ENCODE measurements at regions of chr13 and their contacts with region 1.

Region 1: GRCh38 chr13:32310134-32310706 is 4.9 kb downstream of the ZAR1L start:
- DNase-seq: no peak
- H3K4me3 ChIP-seq: peak overlapping the region; percentile 31 to 36
- H3K27ac ChIP-seq: peak overlapping the region; percentile 14 to 54
- H3K4me1 ChIP-seq: peaks cover 0 to 14% (median 8%) of the 10 kb centered on the region in 4 donors
- H3K27me3 ChIP-seq: no peaks in the 10 kb centered on the region
- CTCF ChIP-seq: peak; percentile 69 to 88

Region 2: DNA sequence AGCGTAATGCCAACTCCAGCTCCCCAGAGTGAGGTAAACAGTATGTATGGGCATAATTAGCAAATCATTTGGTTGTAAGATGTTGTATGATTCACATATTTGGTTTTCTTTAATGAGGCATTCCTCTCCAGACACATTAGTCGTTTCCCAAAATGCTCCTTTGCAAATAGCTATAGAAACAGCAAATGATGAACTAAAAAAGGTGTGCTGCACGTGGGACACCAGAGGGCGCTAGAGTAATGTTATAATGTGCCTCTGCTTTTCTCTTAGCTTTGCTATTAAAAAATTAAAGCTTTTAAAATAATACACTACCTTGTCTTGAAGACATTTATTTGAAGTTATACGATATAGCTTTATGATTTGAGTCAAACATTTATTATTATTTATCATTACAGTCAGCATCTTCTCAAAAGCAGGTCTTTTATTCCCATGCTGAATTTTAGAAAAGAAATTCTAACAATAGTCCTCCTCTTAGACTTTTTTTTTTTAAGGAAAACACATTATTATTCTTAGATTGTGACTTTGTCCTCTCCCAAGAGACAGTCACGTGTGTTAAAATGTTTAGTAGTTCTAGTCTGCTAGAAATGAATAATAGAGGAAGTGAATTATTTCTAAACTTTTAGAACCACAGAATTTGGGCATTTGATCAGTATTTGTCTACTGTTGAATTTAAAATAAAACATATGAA is 400.2 kb before region 1 on chr13:
- intact Hi-C with region 1: loop called (anchors 2 kb)
- DNase-seq: no peak
- H3K4me3 ChIP-seq: no peak overlapping the region
- H3K27ac ChIP-seq: no peak overlapping the region
- H3K4me1 ChIP-seq: peaks cover 0 to 51% (median 14%) of the 10 kb centered on the region in 4 donors
- H3K27me3 ChIP-seq: no peaks in the 10 kb centered on the region
- CTCF ChIP-seq: peak; percentile 82 to 84

Region 3: GRCh38 chr13:32246468-32246867 is 63.8 kb before region 1 on chr13:
- intact Hi-C with region 1: loop called (anchors 10 kb)
- DNase-seq: peak; percentile 55 to 75
- H3K4me3 ChIP-seq: no peak overlapping the region
- H3K27ac ChIP-seq: peak overlapping the region; percentile 28 to 56
- H3K4me1 ChIP-seq: peaks cover 0 to 20% (median 5%) of the 10 kb centered on the region in 4 donors
- H3K27me3 ChIP-seq: no peaks in the 10 kb centered on the region
- CTCF ChIP-seq: peak; percentile 70 to 71

Measured in tibial artery (tissue), 4 donors.